ENCODE measurements at regions of chr5 and their contacts with region 1.

Region 1: DNA sequence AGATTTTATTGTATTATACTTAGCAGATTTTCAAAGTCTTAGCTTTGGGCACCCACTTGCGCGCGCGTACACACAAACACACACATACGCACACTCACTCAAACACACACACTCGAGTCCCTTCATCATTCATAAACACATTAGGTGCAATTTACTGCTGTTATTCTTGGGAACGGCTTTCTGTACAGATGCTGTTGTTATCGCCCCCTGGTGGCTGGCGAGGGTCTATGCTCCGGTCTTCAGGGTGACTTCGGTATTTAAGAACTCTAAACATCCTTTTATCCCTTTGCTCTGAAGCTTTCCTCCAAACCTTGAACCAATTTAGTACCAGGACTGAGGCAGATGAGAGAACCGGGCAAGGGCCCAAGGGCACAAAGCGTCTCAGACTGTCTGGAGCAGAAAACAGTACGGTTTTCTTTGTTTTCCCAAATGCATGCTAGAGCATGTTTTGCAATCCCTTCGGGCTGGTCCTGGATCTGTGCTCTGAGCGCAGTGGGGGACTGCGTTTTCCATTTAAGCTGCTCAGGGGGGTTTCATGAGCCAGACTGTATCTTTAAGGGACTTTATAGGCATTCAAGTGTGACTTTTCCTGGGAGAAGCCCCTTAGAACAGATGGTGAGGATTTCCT is 1.7 kb upstream of the SLIT3 start:
- DNase-seq: peak; percentile 48
- ATAC-seq: peak; percentile 89
- H3K4me3 ChIP-seq: no peak overlapping the region
- H3K27ac ChIP-seq: no peak overlapping the region
- H3K4me1 ChIP-seq: no peaks in the 10 kb centered on the region
- H3K27me3 ChIP-seq: peaks cover 16% of the 10 kb centered on the region; the same call in 1 of the 2 replicates
- CTCF ChIP-seq: peak; percentile 78 to 96 (median 87)
- POLR2A ChIP-seq: no peak
- RAD21 ChIP-seq: peak; percentile 74

Region 2: GRCh38 chr5:168679515-168679920 is 623.1 kb before region 1 on chr5:
- CTCF ChIA-PET with region 1: no interaction called
- POLR2A ChIA-PET with region 1: no interaction called
- RAD21 ChIA-PET with region 1: no interaction called
- intact Hi-C with region 1: loop called (anchors 5 kb)
- DNase-seq: peak; percentile 59
- ATAC-seq: peak; percentile 91
- H3K4me3 ChIP-seq: no peak overlapping the region
- H3K27ac ChIP-seq: no peak overlapping the region
- H3K4me1 ChIP-seq: no peaks in the 10 kb centered on the region
- H3K27me3 ChIP-seq: no peaks in the 10 kb centered on the region; the same call in 1 of the 2 replicates
- CTCF ChIP-seq: peak; percentile 59 to 96 (median 87); a peak in 5 of 6 replicates
- POLR2A ChIP-seq: no peak
- RAD21 ChIP-seq: peak; percentile 83

Region 3: GRCh38 chr5:168706655-168707069 is 595.9 kb before region 1 on chr5:
- CTCF ChIA-PET with region 1: no interaction called
- POLR2A ChIA-PET with region 1: no interaction called
- RAD21 ChIA-PET with region 1: no interaction called
- intact Hi-C with region 1: loop called (anchors 1 kb)
- DNase-seq: peak; percentile 7
- ATAC-seq: peak; percentile 89
- H3K4me3 ChIP-seq: no peak overlapping the region
- H3K27ac ChIP-seq: no peak overlapping the region
- H3K4me1 ChIP-seq: no peaks in the 10 kb centered on the region
- H3K27me3 ChIP-seq: no peaks in the 10 kb centered on the region
- CTCF ChIP-seq: peak; percentile 45 to 71 (median 67); a peak in 5 of 6 replicates
- POLR2A ChIP-seq: no peak
- RAD21 ChIP-seq: peak; percentile 79

Region 4: GRCh38 chr5:168879929-168880328 is 422.7 kb before region 1 on chr5:
- CTCF ChIA-PET with region 1: no interaction called
- POLR2A ChIA-PET with region 1: no interaction called
- RAD21 ChIA-PET with region 1: no interaction called
- intact Hi-C with region 1: no loop called
- DNase-seq: no peak
- ATAC-seq: no peak
- H3K4me3 ChIP-seq: no peak overlapping the region
- H3K27ac ChIP-seq: no peak overlapping the region
- H3K4me1 ChIP-seq: no peaks in the 10 kb centered on the region
- H3K27me3 ChIP-seq: peaks cover 66% of the 10 kb centered on the region
- CTCF ChIP-seq: no peak
- POLR2A ChIP-seq: no peak
- RAD21 ChIP-seq: no peak

Region 5: GRCh38 chr5:169009123-169009522 is 293.5 kb before region 1 on chr5:
- CTCF ChIA-PET with region 1: no interaction called
- POLR2A ChIA-PET with region 1: no interaction called
- RAD21 ChIA-PET with region 1: no interaction called
- intact Hi-C with region 1: no loop called
- DNase-seq: no peak
- ATAC-seq: no peak
- H3K4me3 ChIP-seq: no peak overlapping the region
- H3K27ac ChIP-seq: no peak overlapping the region
- H3K4me1 ChIP-seq: peaks cover 17 to 40% of the 10 kb centered on the region in 2 experiments
- H3K27me3 ChIP-seq: peaks cover 11% of the 10 kb centered on the region; the same call in 1 of the 2 replicates
- CTCF ChIP-seq: no peak
- POLR2A ChIP-seq: no peak
- RAD21 ChIP-seq: no peak

Region 6: DNA sequence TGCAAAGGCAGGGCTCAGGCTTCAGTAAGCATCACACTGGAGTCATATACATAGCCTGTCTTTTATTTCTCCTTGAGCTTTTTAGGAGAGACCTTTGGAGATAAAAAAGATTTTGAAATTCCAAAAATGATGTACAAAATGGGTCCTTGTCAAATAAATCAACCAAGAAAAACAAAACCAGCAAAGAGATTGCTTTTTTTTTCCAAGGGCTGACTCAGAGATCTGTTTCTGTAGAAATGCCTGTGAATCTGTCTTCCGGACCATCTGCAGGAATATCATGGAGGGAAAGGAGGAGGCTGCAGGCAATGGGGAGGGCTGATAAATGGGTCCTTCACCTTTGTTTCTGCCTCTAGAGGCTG is 79.0 kb before region 1 on chr5:
- CTCF ChIA-PET with region 1: no interaction called
- POLR2A ChIA-PET with region 1: no interaction called
- RAD21 ChIA-PET with region 1: no interaction called
- intact Hi-C with region 1: no loop called
- DNase-seq: no peak
- ATAC-seq: no peak
- H3K4me3 ChIP-seq: no peak overlapping the region
- H3K27ac ChIP-seq: no peak overlapping the region
- H3K4me1 ChIP-seq: no peaks in the 10 kb centered on the region
- H3K27me3 ChIP-seq: peaks cover 6% of the 10 kb centered on the region
- CTCF ChIP-seq: no peak
- POLR2A ChIP-seq: no peak
- RAD21 ChIP-seq: no peak